Aorta (tissue), 5 donors: ENCODE measurements at regions of chr1 and their contacts with region 1.

Region 1: DNA sequence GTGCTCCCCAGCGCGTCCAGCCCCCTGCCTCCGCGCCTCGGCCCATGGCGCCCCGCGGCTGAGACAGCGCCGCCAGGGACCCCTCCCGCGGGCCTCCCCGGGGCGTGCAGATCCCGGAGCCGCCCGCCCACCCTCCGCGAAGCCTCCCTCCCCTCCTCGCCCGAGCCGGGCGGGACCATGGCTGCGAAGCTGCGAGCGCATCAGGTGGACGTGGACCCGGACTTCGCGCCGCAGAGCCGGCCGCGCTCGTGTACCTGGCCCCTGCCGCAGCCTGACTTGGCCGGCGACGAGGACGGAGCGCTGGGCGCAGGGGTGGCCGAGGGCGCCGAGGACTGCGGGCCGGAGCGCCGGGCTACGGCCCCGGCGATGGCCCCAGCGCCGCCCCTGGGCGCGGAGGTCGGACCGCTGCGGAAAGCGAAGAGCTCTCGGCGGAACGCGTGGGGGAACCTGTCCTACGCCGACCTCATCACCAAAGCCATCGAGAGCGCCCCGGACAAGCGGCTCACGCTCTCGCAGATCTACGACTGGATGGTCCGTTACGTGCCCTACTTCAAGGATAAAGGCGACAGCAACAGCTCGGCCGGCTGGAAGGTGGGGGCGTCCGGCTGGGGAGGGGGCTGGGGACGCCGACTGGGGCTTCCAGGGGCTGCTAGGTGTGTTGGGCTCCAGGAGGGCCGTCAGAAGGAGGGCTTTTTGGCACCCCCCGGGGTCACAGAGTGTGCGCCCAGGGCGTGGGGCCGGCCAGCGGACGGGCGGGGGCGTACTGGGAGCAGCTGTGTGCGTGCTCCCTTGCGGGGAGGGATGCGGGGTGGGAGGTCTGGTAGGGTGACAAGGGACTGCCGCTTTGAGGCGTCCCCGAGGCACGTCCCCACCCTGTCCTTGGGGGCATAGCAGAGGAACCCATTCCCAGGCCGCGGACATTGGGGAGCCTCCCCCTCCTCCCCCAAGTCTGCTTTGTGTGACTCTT is 803 bp downstream of the FOXO6 start:
- DNase-seq: peak; percentile 56 to 80
- ATAC-seq: no peak
- H3K4me3 ChIP-seq: peak overlapping the region; percentile 38 to 70
- H3K27ac ChIP-seq: no peak overlapping the region
- H3K4me1 ChIP-seq: no peaks in the 10 kb centered on the region
- H3K27me3 ChIP-seq: no peaks in the 10 kb centered on the region

Region 2: DNA sequence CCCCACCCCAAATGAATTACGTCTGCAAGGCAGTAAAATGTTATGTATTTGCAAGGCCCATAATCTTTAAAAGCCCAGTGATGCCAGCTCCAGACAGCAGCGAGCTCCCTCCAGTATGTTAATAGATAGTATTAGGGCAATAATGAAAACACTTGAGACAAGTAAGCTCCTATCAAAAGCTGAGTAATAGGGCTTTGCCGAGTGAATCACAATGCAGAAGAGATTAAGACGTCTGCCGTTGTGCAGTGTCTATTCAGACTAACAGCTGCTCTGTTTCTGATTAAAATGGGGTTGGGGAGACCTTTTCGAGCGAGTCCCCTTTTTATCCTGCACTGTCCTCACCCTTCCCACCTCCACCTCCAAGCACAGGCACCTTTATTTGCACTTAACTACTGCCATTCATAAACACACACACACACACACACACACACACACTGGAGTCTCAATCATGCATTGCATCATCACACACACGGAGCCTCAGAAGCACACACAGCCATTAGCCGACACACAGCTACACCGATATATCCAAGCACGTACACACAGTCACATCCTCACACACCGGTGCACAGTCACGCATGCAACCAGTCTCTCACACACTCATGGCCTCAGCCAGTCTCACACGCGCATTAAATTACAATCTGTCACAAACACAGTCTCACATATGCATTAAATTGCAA is 46.8 kb before region 1 on chr1:
- intact Hi-C with region 1: loop called in 1 of 2 experiments (anchors 5 kb)
- DNase-seq: no peak
- ATAC-seq: no peak
- H3K4me3 ChIP-seq: no peak overlapping the region
- H3K27ac ChIP-seq: no peak overlapping the region
- H3K4me1 ChIP-seq: no peaks in the 10 kb centered on the region
- H3K27me3 ChIP-seq: no peaks in the 10 kb centered on the region

Region 3: DNA sequence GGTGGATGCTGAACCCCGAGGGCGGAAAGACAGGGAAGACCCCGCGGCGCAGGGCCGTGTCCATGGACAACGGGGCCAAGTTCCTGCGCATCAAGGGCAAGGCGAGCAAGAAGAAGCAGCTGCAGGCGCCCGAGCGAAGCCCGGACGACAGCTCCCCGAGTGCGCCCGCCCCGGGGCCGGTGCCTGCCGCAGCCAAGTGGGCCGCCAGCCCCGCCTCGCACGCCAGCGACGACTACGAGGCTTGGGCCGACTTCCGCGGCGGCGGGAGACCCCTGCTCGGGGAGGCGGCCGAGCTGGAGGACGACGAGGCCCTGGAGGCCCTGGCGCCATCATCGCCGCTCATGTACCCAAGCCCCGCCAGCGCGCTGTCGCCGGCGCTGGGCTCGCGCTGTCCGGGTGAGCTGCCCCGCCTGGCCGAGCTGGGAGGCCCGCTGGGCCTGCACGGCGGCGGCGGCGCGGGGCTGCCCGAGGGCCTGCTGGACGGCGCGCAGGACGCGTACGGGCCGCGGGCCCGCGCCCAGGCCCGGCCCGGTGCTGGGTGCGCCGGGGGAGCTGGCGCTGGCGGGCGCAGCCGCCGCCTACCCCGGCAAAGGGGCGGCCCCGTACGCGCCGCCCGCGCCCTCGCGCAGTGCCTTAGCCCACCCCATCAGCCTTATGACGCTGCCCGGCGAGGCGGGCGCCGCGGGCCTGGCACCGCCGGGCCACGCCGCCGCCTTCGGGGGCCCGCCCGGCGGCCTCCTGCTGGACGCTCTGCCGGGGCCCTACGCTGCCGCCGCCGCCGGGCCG is 19.8 kb after region 1 on chr1:
- intact Hi-C with region 1: loop called in 1 of 2 experiments (anchors 2 kb)
- DNase-seq: peak; percentile 78 to 89
- ATAC-seq: peak; percentile 57
- H3K4me3 ChIP-seq: peak overlapping the region; percentile 46 to 51
- H3K27ac ChIP-seq: peak overlapping the region; percentile 92 to 95
- H3K4me1 ChIP-seq: no peaks in the 10 kb centered on the region
- H3K27me3 ChIP-seq: no peaks in the 10 kb centered on the region

Region 4: GRCh38 chr1:41416552-41417334 is 54.7 kb after region 1 on chr1:
- intact Hi-C with region 1: loop called in 1 of 2 experiments (anchors 2 kb)
- DNase-seq: peak; percentile 80 to 86
- ATAC-seq: peak; percentile 75
- H3K4me3 ChIP-seq: no peak overlapping the region
- H3K27ac ChIP-seq: no peak overlapping the region
- H3K4me1 ChIP-seq: no peaks in the 10 kb centered on the region
- H3K27me3 ChIP-seq: no peaks in the 10 kb centered on the region